ENCODE measurements at regions of chr2 and their contacts with region 1.

Region 1: GRCh38 chr2:10097352-10098148 is 17.3 kb upstream of the CYS1 start:
- DNase-seq: peak; percentile 75
- H3K4me3 ChIP-seq: no peak overlapping the region
- H3K27ac ChIP-seq: no peak overlapping the region
- H3K4me1 ChIP-seq: peaks cover 0 to 8% (median 0%) of the 10 kb centered on the region in 4 donors
- H3K27me3 ChIP-seq: peaks cover 6% of the 10 kb centered on the region
- CTCF ChIP-seq: peak; percentile 86 to 95 (median 89)
- EP300 ChIP-seq: no peak
- POLR2A ChIP-seq: no peak

Region 2: GRCh38 chr2:10109311-10109710 is 11.8 kb after region 1 on chr2:
- in situ Hi-C with region 1: no loop called
- intact Hi-C with region 1: no loop called
- DNase-seq: no peak
- H3K4me3 ChIP-seq: no peak overlapping the region
- H3K27ac ChIP-seq: no peak overlapping the region
- H3K4me1 ChIP-seq: peaks cover 0 to 4% (median 0%) of the 10 kb centered on the region in 4 donors
- H3K27me3 ChIP-seq: no peaks in the 10 kb centered on the region
- CTCF ChIP-seq: no peak
- EP300 ChIP-seq: no peak
- POLR2A ChIP-seq: no peak

Region 3: GRCh38 chr2:10659898-10660568 is 562.5 kb after region 1 on chr2:
- in situ Hi-C with region 1: loop called in 2 of 4 experiments (anchors 25 kb)
- intact Hi-C with region 1: no loop called
- DNase-seq: peak; percentile 56
- H3K4me3 ChIP-seq: no peak overlapping the region
- H3K27ac ChIP-seq: no peak overlapping the region
- H3K4me1 ChIP-seq: no peaks in the 10 kb centered on the region
- H3K27me3 ChIP-seq: no peaks in the 10 kb centered on the region
- CTCF ChIP-seq: peak; percentile 55 to 77 (median 66)
- EP300 ChIP-seq: no peak
- POLR2A ChIP-seq: no peak

Region 4: DNA sequence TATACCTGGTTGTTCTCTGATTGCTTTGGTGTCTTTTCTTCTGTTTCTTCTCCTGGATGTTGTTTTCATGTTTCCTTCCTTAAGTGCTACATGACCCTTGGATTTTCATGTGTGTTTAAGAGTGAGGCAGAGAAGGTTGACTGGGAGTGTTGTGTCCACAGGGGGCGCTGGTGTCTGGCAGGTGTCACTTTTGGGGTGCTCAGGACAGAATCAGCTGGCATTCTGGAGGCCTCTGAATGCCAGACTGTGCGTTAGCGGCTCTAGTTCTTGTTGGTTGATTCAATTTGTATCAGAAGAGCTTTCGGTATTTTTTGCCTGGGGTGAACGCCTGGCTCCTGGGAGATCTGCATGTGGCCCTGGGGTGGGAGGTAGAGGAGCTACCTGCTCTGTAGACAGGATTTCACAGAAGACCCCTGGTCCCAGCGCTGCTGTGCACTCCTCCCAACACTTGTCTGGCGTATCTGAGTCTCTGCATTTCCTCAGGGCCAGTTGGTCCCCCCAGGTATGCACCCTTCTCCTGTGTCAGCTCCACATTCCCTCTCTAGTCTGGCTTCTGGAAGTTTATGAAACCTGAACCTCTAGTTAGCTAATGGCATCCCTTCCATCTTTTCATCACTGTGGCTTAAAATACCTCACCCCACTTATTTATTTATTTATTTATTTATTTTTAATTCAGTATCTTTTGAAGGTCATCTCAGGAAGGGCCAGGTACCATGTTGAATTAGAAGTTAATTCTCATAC is 1437.4 kb after region 1 on chr2:
- in situ Hi-C with region 1: no loop called
- intact Hi-C with region 1: no loop called
- DNase-seq: no peak
- H3K4me3 ChIP-seq: no peak overlapping the region
- H3K27ac ChIP-seq: no peak overlapping the region
- H3K4me1 ChIP-seq: peaks cover 0 to 21% (median 6%) of the 10 kb centered on the region in 4 donors
- H3K27me3 ChIP-seq: peaks cover 9% of the 10 kb centered on the region
- CTCF ChIP-seq: no peak
- EP300 ChIP-seq: no peak
- POLR2A ChIP-seq: no peak

Measured in transverse colon (tissue), 4 donors.